ENCODE measurements at regions of chr11 and their contacts with region 1.

Region 1: GRCh38 chr11:22244986-22245592 is 52.2 kb downstream of the ANO5 start:
- DNase-seq: peak; percentile 53
- H3K4me3 ChIP-seq: no peak overlapping the region
- H3K27ac ChIP-seq: no peak overlapping the region
- H3K4me1 ChIP-seq: no peaks in the 10 kb centered on the region
- H3K27me3 ChIP-seq: no peaks in the 10 kb centered on the region
- CTCF ChIP-seq: peak; percentile 68

Region 2: GRCh38 chr11:22192642-22193347 is 52.3 kb before region 1 on chr11 and contains the start of gene ANO5:
- CTCF ChIA-PET with region 1: no interaction called
- POLR2A ChIA-PET with region 1: no interaction called
- intact Hi-C with region 1: loop called (anchors 5 kb)
- DNase-seq: peak; percentile 71
- H3K4me3 ChIP-seq: peak within 1 kb of the TSS; percentile 80
- H3K27ac ChIP-seq: peak within 1 kb of the TSS; percentile 65
- H3K4me1 ChIP-seq: peaks cover 13% of the 10 kb centered on the region
- H3K27me3 ChIP-seq: no peaks in the 10 kb centered on the region
- CTCF ChIP-seq: no peak
- total RNA-seq, gene ANO5: 3.7 and 3.8 TPM in 2 replicates

Region 3: DNA sequence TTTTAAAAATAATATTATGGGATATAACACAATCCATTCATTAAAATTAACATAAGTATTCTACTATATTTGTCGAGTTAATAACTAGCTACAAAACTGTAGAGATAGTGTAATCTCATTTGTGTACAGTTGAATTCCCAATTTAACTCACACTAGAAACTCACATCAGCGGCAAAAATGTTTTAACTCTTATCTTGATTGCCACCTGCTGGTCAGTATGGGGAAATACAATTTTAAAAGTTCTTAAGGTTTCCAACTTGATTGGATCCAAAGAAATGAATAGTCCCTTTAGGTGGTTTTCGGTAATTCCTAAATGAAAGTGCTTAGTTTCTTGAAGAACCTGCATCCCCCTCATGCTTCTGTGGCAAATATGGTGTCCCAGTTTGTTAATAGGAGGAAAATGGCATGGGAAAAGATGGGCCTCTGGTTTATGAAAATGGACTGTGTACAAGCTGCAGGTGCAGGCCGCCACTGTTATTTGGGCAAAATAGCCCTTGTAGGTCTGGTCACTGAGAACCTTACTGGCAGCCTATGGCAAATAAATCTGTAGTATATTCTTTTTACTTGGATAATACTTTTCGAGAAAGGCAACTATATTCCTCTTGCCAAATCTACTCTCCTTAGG is 59.4 kb after region 1 on chr11:
- CTCF ChIA-PET with region 1: interaction called, 3 read pairs
- POLR2A ChIA-PET with region 1: no interaction called
- intact Hi-C with region 1: loop called (anchors 5 kb)
- DNase-seq: peak; percentile 52
- H3K4me3 ChIP-seq: no peak overlapping the region
- H3K27ac ChIP-seq: no peak overlapping the region
- H3K4me1 ChIP-seq: no peaks in the 10 kb centered on the region
- H3K27me3 ChIP-seq: no peaks in the 10 kb centered on the region
- CTCF ChIP-seq: peak; percentile 67

Measured in A673 (cell line).